ENCODE measurements at regions of chr12 and their contacts with region 1.

Region 1: DNA sequence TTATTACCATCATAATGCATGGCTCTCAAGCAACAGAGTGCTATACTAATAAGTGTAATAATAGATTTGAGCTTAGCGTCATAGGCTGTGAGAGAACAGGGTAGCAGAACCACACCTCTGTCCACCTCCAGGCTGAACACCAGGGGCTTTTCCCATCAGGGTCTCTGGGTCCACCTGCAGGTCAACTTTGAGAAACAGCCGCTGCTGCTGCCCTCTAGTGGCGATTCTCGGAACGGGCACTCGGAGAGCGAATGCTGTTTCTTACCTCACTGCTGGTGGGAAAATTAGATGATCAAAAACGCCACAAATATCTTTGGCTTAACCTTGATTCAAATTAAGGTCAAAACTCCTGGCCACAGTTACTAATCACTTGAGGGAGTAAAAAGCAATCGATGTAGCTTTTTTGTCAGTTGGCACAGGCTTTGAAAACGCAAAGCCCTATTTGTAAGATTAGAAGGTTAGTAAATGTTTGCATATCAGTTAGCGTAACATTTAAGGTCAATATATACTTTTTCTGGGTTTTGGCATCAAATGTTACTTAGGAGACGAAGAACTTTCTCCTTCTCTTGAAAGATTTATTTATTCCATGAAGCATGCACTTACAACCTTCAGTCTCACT is 127.9 kb upstream of the TMEM132D start:
- DNase-seq: peak; percentile 73 to 81
- H3K4me3 ChIP-seq: no peak overlapping the region
- H3K4me3 Mint-ChIP-seq: no peak overlapping the region
- H3K27ac Mint-ChIP-seq: no peak overlapping the region
- H3K4me1 ChIP-seq: no peaks in the 10 kb centered on the region
- H3K4me1 Mint-ChIP-seq: no peaks in the 10 kb centered on the region
- H3K27me3 ChIP-seq: no peaks in the 10 kb centered on the region
- H3K27me3 Mint-ChIP-seq: peaks cover 6% of the 10 kb centered on the region
- CTCF ChIP-seq: peak; percentile 93 to 94

Region 2: GRCh38 chr12:129830796-129831195 is 200.9 kb before region 1 on chr12:
- CTCF ChIA-PET with region 1: no interaction called
- POLR2A ChIA-PET with region 1: no interaction called
- intact Hi-C with region 1: no loop called
- DNase-seq: no peak
- H3K4me3 ChIP-seq: no peak overlapping the region
- H3K4me3 Mint-ChIP-seq: no peak overlapping the region
- H3K27ac Mint-ChIP-seq: no peak overlapping the region
- H3K4me1 ChIP-seq: no peaks in the 10 kb centered on the region
- H3K4me1 Mint-ChIP-seq: no peaks in the 10 kb centered on the region
- H3K27me3 ChIP-seq: no peaks in the 10 kb centered on the region
- H3K27me3 Mint-ChIP-seq: peaks cover 12% of the 10 kb centered on the region
- CTCF ChIP-seq: no peak

Region 3: GRCh38 chr12:130335517-130336392 is 304.1 kb after region 1 on chr12:
- CTCF ChIA-PET with region 1: interaction called, 3 read pairs
- POLR2A ChIA-PET with region 1: no interaction called
- intact Hi-C with region 1: loop called (anchors 1 kb)
- DNase-seq: peak in 1 of 2 experiments; percentile 62
- H3K4me3 ChIP-seq: no peak overlapping the region
- H3K4me3 Mint-ChIP-seq: no peak overlapping the region
- H3K27ac Mint-ChIP-seq: no peak overlapping the region
- H3K4me1 ChIP-seq: 0 out of 2 replicates have a peak, but pooled peaks cover 3% of the 10 kb centered on the region
- H3K4me1 Mint-ChIP-seq: peaks cover 7% of the 10 kb centered on the region
- H3K27me3 ChIP-seq: no peaks in the 10 kb centered on the region
- H3K27me3 Mint-ChIP-seq: peaks cover 4% of the 10 kb centered on the region
- CTCF ChIP-seq: peak; percentile 50 to 59

Measured in Caco-2 (cell line).